ENCODE measurements at regions of chr16 and their contacts with region 1.

Region 1: GRCh38 chr16:70737377-70738082 is 51.7 kb upstream of the MTSS2 start:
- DNase-seq: peak; percentile 63
- H3K4me3 ChIP-seq: no peak overlapping the region
- CTCF ChIP-seq: no peak

Region 2: GRCh38 chr16:70685938-70686375 is 51.6 kb before region 1 on chr16 and contains the start of gene MTSS2:
- CTCF ChIA-PET with region 1: interaction called, 18 read pairs
- POLR2A ChIA-PET with region 1: interaction called, 4 read pairs
- DNase-seq: no peak
- H3K4me3 ChIP-seq: peak within 1 kb of the TSS; percentile 86
- CTCF ChIP-seq: no peak

Region 3: GRCh38 chr16:70703041-70703834 is 34.3 kb before region 1 on chr16:
- CTCF ChIA-PET with region 1: interaction called, 18 read pairs
- POLR2A ChIA-PET with region 1: interaction called, 4 read pairs
- DNase-seq: peak; percentile 75
- H3K4me3 ChIP-seq: no peak overlapping the region
- CTCF ChIP-seq: peak; percentile 70

Region 4: GRCh38 chr16:70750893-70751475 is 13.5 kb after region 1 on chr16:
- CTCF ChIA-PET with region 1: interaction called, 17 read pairs
- POLR2A ChIA-PET with region 1: interaction called, 3 read pairs
- DNase-seq: peak; percentile 40
- H3K4me3 ChIP-seq: no peak overlapping the region
- CTCF ChIP-seq: no peak